Posterior vena cava (tissue), 2 donors: ENCODE measurements at regions of chr2 and their contacts with region 1.

Region 1: DNA sequence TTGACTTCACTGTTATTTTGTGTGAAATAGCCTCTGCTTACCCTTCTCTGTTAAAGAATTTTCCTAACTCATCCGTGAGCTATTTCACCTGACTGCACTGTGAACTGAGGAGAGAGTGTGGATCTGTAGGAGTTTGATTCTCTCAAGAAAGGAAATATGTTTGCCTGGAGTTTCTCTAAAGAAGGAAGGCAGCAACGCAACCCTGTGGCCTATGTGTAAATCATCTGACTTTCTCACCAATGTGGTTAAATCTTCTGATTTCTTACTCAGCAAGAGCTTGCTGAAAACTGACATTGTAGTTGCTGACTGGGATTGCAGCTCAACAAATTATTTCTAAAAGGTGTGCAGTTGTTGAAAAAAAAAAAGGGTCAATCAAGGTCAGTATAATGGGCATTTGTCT is 153.9 kb upstream of the PELI1 start:
- DNase-seq: no peak

Region 2: DNA sequence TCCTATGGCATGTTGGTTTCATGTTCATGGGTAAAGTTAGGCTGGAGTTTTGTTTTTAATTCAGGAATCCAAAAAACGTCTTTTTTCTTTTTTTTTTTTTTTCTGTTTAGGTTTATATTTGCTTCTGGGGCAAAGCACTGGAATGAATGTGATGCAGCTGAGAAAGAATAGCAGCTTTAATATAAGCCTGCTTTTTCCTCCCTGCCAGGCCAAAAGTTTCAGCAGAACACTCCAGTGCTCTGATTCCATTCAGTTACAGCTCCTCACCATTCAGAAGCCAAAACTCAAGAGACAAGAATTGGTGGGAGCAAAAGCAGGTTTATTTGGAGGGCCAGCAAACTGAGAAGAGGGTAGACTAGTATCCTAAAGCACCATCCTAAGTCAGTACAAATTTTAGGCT is 51.2 kb before region 1 on chr2:
- intact Hi-C with region 1: loop called in 1 of 2 experiments (anchors 2 kb)
- DNase-seq: no peak